ENCODE measurements at regions of chr1 and their contacts with region 1.

Region 1: DNA sequence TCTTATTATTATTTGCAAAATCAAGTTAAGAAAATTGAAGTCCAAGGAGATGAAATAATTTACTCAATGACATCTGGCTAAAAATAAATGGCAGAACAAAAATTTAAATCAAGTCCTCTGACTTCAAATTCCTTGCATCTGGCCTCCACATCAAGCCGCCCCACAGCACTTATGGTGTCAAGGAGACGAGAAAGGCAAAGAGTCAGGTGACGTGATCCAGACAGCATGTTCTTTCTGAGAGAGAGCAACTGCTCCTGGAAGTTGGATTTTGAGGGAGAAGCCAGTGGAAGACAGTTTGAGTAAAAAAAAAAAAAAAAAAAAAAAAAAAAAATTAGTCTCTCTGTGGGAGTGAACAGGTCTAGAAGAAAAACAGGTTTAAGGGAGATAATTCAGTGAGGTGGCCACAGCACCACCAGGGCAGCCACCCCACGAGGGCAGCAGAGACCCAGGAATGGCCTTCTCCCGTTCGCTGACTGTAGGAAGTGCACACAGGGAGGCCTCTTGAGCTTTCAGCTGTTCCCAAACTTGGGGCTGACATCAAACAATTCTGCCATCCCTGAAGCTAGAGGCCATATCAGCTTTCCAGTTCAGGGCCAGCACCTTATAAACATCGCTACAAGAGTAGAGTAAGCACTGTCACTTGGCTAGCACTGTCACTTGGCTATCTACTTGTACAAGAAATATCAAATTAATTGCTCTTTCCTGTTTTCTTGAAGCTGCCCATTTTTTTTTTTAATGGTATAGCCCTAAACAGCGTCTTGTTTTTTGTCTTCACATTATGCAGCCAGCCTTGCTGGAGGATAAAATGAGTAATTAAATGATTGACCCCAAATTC is 7.8 kb downstream of the C1orf162 start:
- DNase-seq: peak; percentile 74
- ATAC-seq: peak; percentile 94 to 97

Region 2: DNA sequence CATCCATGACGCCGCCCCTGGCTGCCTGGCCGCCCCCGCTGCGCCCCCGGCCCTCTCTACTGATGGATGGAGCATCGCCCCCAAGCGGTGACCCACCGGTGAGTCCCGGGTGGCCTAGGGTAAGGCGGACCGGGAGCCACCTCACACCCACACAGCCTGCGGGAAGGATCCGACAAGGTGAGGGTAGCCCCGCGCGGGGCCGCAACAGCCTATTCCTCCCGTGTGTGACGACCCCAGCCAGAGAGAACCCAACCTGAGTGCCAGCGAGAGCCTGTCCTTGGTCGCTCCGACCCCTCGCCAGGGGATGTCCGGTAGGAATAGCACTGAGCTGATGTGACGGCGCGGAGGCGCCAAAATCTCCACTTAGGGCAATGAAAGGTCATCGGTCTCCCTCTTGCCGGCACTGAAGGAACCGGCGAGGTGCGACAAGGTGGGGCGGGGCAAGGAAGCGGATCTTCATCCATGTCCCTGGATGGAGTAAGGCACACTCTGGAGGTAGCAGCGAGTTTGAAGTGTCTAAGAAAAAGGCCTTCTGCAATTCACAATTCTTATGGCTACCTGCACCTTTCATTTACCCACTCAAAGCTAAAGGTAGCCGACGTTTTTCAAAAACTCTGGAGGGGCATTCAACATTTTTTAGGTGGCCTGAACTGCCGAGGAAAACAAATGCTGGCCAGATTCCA is 210.7 kb before region 1 on chr1:
- intact Hi-C with region 1: no loop called
- DNase-seq: no peak
- ATAC-seq: no peak

Region 3: DNA sequence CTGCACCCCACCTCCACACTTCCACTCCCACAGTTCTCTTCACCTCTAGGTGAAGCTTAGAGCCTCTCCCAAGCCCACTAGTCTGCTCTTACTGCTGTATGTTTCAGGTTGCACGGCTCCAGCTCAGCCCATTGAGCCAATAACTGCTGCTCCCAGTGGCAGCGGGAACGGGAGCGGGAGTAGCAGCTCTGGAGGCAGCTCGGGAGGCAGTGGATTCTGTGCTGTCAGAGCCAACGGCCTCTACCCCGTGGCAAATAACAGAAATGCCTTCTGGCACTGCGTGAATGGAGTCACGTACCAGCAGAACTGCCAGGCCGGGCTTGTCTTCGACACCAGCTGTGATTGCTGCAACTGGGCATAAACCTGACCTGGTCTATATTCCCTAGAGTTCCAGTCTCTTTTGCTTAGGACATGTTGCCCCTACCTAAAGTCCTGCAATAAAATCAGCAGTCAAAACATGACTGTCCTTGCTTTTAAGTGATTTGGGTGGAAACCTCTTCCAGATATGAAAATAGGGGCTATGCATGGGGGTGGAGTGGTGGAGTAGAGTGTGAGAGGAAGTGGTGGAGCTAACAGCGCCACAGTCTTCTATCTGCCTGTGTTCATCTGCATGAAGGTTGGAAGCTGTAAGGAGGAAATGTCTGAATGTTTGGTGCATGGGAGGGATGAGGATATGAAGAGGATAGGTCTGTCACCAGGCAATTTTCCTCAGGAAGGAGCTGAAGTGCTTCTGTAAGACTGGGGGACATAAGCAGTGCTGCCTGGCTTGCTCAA is 161.3 kb before region 1 on chr1:
- intact Hi-C with region 1: no loop called
- DNase-seq: no peak
- ATAC-seq: no peak

Region 4: GRCh38 chr1:111516005-111516535 is 34.5 kb after region 1 on chr1:
- intact Hi-C with region 1: no loop called
- DNase-seq: peak; percentile 83
- ATAC-seq: peak; percentile 74 to 76

Region 5: GRCh38 chr1:111538343-111539025 is 56.9 kb after region 1 on chr1:
- intact Hi-C with region 1: no loop called
- DNase-seq: no peak
- ATAC-seq: no peak

Region 6: GRCh38 chr1:111656086-111657017 is 174.7 kb after region 1 on chr1:
- intact Hi-C with region 1: loop called in 1 of 2 experiments (anchors 2 kb)
- DNase-seq: no peak
- ATAC-seq: peak; percentile 47 to 76

Region 7: GRCh38 chr1:111755331-111756123 is 273.9 kb after region 1 on chr1 and contains the start of gene DDX20:
- intact Hi-C with region 1: loop called (anchors 5 to 10 kb)
- DNase-seq: peak; percentile 94
- ATAC-seq: peak; percentile 97 to 98
- total RNA-seq, gene DDX20: 7.8 TPM

Region 8: DNA sequence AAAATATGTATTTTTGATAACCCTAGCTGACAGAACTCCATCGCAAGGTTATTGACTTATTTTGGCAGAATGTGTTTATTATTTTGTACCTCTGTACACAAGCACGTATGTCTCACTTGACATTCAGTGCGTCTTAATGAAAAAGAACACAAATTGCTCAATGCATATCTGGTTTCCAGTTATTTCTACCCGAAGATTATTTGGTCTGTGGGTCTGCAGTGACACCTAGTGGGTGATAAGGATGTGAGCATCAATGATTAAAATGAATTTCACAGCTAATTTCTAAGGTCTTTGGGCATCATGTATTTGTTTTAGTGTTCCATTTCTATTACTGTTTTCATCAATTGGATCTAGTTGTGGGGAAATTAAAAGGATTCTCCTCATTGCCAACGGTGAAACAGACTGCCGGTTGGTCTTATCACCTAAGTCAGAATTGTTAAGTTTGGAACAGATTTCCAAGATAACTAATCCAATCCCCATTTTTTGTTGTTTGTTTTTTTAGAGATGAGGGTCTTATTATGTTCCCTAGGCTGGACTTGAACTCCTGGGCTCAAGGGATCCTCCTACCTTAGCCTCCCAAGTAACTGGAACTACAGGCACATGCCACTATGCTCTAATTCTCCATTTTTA is 288.0 kb after region 1 on chr1:
- intact Hi-C with region 1: loop called in 1 of 2 experiments (anchors 2 kb)
- DNase-seq: no peak
- ATAC-seq: peak; percentile 50 to 64